MCF 10A (cell line): ENCODE measurements at regions of chr14 and their contacts with region 1.

Region 1: GRCh38 chr14:69580009-69580577 is 5.4 kb upstream of the CCDC177 start:
- DNase-seq: peak; percentile 90
- H3K4me3 Mint-ChIP-seq: no peak overlapping the region
- H3K27ac Mint-ChIP-seq: peak overlapping the region; percentile 32
- H3K4me1 Mint-ChIP-seq: peaks cover 18% of the 10 kb centered on the region
- H3K27me3 Mint-ChIP-seq: peaks cover 17% of the 10 kb centered on the region
- CTCF ChIP-seq: peak; percentile 49

Region 2: GRCh38 chr14:69535230-69535848 is 44.8 kb before region 1 on chr14:
- CTCF ChIA-PET with region 1: interaction called, 113 read pairs
- POLR2A ChIA-PET with region 1: interaction called, 9 read pairs
- intact Hi-C with region 1: no loop called
- DNase-seq: peak; percentile 72
- H3K4me3 Mint-ChIP-seq: no peak overlapping the region
- H3K27ac Mint-ChIP-seq: no peak overlapping the region
- H3K4me1 Mint-ChIP-seq: no peaks in the 10 kb centered on the region
- H3K27me3 Mint-ChIP-seq: peaks cover 18% of the 10 kb centered on the region
- CTCF ChIP-seq: peak; percentile 69

Region 3: DNA sequence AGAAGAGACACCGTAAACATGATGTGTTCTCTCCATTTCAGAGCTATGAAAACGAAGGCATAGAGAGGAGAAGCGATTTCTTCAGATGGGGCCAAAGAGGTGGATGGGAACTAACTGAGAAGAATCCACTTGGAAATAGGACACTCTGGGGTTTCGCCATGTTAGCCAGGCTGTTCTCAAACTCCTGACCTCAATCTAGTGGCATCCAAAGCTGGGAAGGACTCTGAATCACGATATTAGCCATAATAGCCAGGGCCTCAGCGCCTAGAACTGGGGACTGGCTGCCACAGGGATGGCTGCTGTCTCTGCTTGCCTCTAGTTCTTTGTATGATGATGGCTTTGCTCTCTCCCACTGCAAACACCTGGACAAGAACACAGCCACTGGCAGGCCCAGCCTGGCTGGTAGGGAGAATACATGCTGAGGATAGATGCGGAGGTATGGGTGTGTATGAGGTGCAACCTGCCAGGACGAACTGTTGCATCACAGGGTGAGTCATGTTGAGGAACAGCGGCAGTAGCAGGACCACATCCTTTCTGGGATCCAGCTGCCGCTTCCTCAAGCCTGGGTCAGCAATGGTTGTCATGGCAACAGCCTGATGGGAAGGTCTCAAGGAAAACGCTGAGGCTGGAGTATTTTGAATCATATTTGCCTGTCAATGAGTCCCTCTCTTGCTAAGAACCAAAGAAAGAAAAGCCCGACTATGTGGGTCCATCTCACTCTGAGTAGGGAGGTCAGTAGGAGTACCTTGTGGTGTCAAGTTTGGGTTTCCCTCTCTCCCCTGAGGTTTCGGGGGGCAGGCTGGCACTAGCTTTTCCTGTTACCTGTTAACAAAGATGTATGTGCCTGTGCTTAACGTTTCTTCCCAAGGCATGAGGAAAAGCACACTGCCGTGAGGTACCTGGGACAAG is 36.5 kb before region 1 on chr14:
- CTCF ChIA-PET with region 1: interaction called, 113 read pairs
- POLR2A ChIA-PET with region 1: interaction called, 6 read pairs
- intact Hi-C with region 1: no loop called
- DNase-seq: peak; percentile 98
- H3K4me3 Mint-ChIP-seq: no peak overlapping the region
- H3K27ac Mint-ChIP-seq: no peak overlapping the region
- H3K4me1 Mint-ChIP-seq: peaks cover 11% of the 10 kb centered on the region
- H3K27me3 Mint-ChIP-seq: no peaks in the 10 kb centered on the region
- CTCF ChIP-seq: no peak

Region 4: GRCh38 chr14:69726761-69727511 is 146.8 kb after region 1 on chr14:
- CTCF ChIA-PET with region 1: interaction called, 127 read pairs
- POLR2A ChIA-PET with region 1: interaction called, 3 read pairs
- intact Hi-C with region 1: loop called (anchors 1 kb)
- DNase-seq: peak; percentile 79
- H3K4me3 Mint-ChIP-seq: peak overlapping the region; percentile 59
- H3K27ac Mint-ChIP-seq: no peak overlapping the region
- H3K4me1 Mint-ChIP-seq: peaks cover 6% of the 10 kb centered on the region
- H3K27me3 Mint-ChIP-seq: no peaks in the 10 kb centered on the region
- CTCF ChIP-seq: peak; percentile 94